IMR-90 (cell line): ENCODE measurements at regions of chr10 and their contacts with region 1.

Region 1: GRCh38 chr10:89115876-89116627 is 91.1 kb downstream of the CH25H start:
- DNase-seq: peak; percentile 58
- ATAC-seq: peak; percentile 60
- H3K4me3 ChIP-seq: no peak overlapping the region
- H3K27ac ChIP-seq: no peak overlapping the region
- H3K4me1 ChIP-seq: peaks cover 7% of the 10 kb centered on the region
- H3K27me3 ChIP-seq: no peaks in the 10 kb centered on the region
- CTCF ChIP-seq: no peak
- POLR2A ChIP-seq: no peak
- RAD21 ChIP-seq: no peak

Region 2: GRCh38 chr10:89101921-89102320 is 14.1 kb before region 1 on chr10:
- CTCF ChIA-PET with region 1: interaction called, 4 read pairs
- POLR2A ChIA-PET with region 1: no interaction called
- dilution Hi-C with region 1: no loop called
- in situ Hi-C with region 1: no loop called
- intact Hi-C with region 1: loop called (anchors 2 kb)
- DNase-seq: no peak
- ATAC-seq: no peak
- H3K4me3 ChIP-seq: no peak overlapping the region
- H3K27ac ChIP-seq: no peak overlapping the region
- H3K4me1 ChIP-seq: peaks cover 10% of the 10 kb centered on the region
- H3K27me3 ChIP-seq: no peaks in the 10 kb centered on the region
- CTCF ChIP-seq: no peak
- POLR2A ChIP-seq: no peak
- RAD21 ChIP-seq: no peak

Region 3: DNA sequence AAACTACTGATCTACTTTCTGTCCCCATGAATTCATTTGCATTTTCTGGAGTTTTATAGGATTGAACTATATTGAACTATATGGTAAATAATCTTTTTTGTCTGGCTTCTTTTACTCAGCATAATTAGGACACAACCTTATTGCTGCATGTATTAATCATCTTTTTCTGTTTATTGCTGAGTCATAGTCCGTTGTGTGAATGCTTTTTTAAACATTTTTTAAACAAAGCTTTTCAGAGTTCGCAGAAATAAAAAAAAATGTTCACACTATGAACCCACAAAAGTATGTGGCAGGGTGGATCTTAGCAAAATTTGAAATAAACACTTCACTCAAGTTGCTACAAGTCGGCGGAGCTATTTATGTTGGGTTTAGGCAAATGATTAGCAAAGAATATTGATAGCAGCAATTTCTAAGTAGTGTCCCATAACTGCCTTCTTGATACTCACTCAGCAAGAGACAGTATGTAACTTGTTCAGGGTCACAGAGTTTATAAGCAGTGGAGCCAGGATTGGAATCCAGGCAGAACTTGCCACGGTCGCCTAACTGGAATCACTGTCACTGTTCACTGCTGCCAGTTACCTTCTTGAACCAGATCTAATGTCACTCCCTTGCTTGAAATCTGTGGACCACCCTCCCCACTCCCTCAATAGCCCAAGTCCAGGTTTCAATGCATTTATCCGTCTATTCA is 85.4 kb after region 1 on chr10:
- CTCF ChIA-PET with region 1: no interaction called
- POLR2A ChIA-PET with region 1: no interaction called
- dilution Hi-C with region 1: no loop called
- in situ Hi-C with region 1: no loop called
- intact Hi-C with region 1: loop called (anchors 5 kb)
- DNase-seq: peak; percentile 35
- ATAC-seq: peak; percentile 31
- H3K4me3 ChIP-seq: no peak overlapping the region
- H3K27ac ChIP-seq: peak overlapping the region; percentile 24; the same call in 1 of the 2 replicates
- H3K4me1 ChIP-seq: peaks cover 18% of the 10 kb centered on the region
- H3K27me3 ChIP-seq: peaks cover 4% of the 10 kb centered on the region; the same call in 1 of the 2 replicates
- CTCF ChIP-seq: no peak
- POLR2A ChIP-seq: no peak
- RAD21 ChIP-seq: no peak